Mammary epithelial cell (primary cell): ENCODE measurements at regions of chr15 and their contacts with region 1.

Region 1: GRCh38 chr15:56491110-56491722 is 26.3 kb upstream of the MNS1 start:
- DNase-seq: peak; percentile 48
- H3K4me3 ChIP-seq: no peak overlapping the region
- H3K27ac ChIP-seq: no peak overlapping the region
- H3K4me1 ChIP-seq: no peaks in the 10 kb centered on the region
- H3K27me3 ChIP-seq: no peaks in the 10 kb centered on the region
- CTCF ChIP-seq: peak; percentile 95 to 99

Region 2: DNA sequence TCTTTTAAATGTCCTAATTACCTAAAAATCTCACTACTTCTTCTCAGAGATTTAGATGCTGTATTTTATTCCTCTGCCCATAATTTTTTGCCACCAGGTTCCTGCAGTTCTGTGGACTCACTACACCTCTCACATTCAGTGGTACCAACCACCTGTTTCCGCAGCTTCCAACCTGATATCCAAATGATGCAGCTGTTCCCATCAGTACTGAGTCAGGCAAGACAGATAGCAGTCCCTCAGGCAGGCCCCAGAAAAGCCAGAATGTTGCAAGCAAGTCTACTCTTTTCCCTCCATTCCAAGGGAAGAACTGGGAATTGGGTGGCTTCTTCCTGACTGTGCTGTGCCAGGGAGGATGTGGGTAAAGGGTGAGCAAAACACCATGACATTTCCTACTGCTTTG is 65.2 kb before region 1 on chr15:
- CTCF ChIA-PET with region 1: no interaction called
- dilution Hi-C with region 1: no loop called
- in situ Hi-C with region 1: no loop called
- intact Hi-C with region 1: no loop called
- DNase-seq: no peak
- H3K4me3 ChIP-seq: no peak overlapping the region
- H3K27ac ChIP-seq: no peak overlapping the region
- H3K4me1 ChIP-seq: no peaks in the 10 kb centered on the region
- H3K27me3 ChIP-seq: no peaks in the 10 kb centered on the region
- CTCF ChIP-seq: no peak

Region 3: DNA sequence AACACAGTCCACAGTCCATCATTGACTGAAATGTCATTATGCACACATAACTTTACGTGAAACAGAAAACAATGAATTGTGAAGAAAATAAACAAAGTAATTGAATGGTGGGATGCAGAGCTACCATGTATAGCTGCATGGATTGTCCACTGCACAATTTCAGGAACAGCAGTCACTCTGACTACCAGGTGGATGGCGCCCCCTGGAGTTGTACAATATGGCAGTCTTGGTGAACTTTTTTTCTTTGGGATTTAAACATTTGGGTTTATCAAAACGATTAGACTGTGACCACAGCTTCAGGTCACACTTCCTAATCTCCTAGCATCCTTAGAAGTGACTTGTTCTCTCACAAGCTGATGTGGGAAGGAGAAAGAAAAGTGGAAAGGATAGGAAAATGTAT is 378.4 kb after region 1 on chr15:
- CTCF ChIA-PET with region 1: interaction called, 6 read pairs
- dilution Hi-C with region 1: no loop called
- in situ Hi-C with region 1: loop called in 1 of 2 experiments (anchors 10 kb)
- intact Hi-C with region 1: loop called (anchors 1 kb)
- DNase-seq: no peak
- H3K4me3 ChIP-seq: no peak overlapping the region
- H3K27ac ChIP-seq: no peak overlapping the region
- H3K4me1 ChIP-seq: peaks cover 9% of the 10 kb centered on the region
- H3K27me3 ChIP-seq: no peaks in the 10 kb centered on the region
- CTCF ChIP-seq: peak; percentile 41 to 48

Region 4: DNA sequence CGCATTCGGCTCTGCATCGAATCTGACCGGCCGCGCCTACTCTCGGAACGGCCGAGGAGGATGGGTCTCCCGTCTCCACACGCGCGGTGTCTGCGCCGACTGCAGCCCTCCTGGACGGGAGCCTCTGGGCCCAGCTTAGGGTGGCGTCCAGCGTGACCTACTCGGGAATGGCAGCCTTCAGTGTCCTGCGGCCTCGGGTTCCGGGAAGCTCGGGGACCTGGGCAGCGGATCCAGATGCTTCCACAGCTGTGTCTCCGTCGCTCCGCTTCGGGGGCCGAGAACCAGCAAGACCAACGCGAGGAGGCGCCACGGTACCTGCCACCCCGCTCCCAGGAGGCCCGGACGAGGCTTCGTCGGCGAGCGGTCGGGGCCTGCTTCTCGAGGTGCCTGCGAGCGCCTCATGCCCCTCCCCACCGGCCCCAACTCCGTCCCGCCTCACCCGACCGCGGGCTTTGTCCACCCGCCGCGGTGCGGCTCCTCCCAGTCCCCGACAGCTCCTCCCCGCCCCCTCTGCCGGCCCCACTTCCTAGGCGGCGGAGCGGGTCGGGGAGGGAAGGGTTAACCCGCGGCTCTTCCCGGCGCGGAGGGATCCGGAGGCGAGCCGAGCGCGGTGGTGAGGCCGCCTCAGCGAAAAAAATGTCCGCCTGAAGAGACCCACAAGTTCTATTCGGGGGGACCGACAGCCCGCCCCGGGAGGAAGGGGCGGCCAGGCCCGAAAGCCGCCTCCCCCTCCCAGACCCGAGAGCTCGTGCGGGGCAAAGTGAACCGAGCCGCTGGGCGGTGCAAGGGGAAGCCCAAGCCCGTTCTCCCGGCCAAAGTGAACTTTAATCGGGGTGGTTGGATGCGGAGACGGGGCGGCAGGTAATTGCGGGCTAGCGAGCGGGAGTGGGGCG is 427.1 kb after region 1 on chr15 and contains the start of gene TCF12:
- CTCF ChIA-PET with region 1: no interaction called
- dilution Hi-C with region 1: no loop called
- in situ Hi-C with region 1: no loop called
- intact Hi-C with region 1: no loop called
- DNase-seq: peak; percentile 95
- H3K4me3 ChIP-seq: peak within 1 kb of the TSS; percentile 90 to 98 (median 97)
- H3K27ac ChIP-seq: peak within 1 kb of the TSS; percentile 84
- H3K4me1 ChIP-seq: peaks cover 8% of the 10 kb centered on the region
- H3K27me3 ChIP-seq: no peaks in the 10 kb centered on the region
- CTCF ChIP-seq: peak in 1 of 2 donors; percentile 66
- total RNA-seq, gene TCF12: 91.7 to 110 TPM

Region 5: GRCh38 chr15:57138349-57138788 is 647.2 kb after region 1 on chr15:
- CTCF ChIA-PET with region 1: no interaction called
- dilution Hi-C with region 1: no loop called
- in situ Hi-C with region 1: loop called in 1 of 2 experiments (anchors 10 kb)
- intact Hi-C with region 1: loop called (anchors 5 kb)
- DNase-seq: peak; percentile 41
- H3K4me3 ChIP-seq: no peak overlapping the region
- H3K27ac ChIP-seq: no peak overlapping the region
- H3K4me1 ChIP-seq: no peaks in the 10 kb centered on the region
- H3K27me3 ChIP-seq: no peaks in the 10 kb centered on the region
- CTCF ChIP-seq: peak; percentile 90 to 93

Region 6: GRCh38 chr15:57259568-57260040 is 768.4 kb after region 1 on chr15:
- CTCF ChIA-PET with region 1: no interaction called
- dilution Hi-C with region 1: loop called (anchors 25 kb)
- in situ Hi-C with region 1: no loop called
- intact Hi-C with region 1: no loop called
- DNase-seq: no peak
- H3K4me3 ChIP-seq: no peak overlapping the region
- H3K27ac ChIP-seq: no peak overlapping the region
- H3K4me1 ChIP-seq: no peaks in the 10 kb centered on the region
- H3K27me3 ChIP-seq: no peaks in the 10 kb centered on the region
- CTCF ChIP-seq: no peak

Region 7: DNA sequence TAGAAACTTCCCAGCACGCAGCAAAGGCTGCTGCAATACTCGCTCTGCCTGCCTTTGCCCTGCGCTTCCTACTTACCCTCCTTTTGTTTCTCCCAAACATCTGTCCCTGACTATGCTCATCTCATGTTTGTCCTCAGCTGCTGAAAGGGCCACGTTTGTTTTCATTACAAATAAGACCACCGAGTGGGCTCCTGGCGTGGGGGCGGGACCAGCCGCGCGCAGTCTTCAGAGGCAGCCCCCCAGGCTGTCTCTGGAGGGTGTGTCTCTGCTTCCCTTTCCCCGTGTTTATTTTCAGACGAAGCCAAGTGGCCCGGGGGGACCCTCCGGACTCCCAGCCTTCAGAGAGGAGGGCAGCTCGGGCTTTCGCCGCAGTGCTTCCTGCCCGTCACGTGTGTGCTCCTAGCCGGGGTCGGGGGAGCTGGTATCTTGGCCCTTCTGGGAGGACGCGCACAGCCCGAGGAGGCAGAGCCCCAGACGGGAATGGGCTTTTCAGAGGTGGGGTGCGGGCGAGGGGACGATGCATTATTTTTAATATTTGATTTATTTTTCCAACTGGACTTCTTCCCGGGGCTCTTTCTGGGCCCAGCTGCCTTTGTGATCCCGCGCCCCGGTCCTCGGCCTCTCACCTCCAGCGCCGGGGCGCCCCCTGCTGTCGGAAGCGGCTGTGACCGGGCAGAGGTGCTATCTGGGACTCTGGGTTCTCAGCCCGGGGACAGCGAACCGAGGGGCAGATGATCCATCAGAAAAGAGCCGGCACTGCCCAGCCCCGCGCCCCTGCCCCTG is 815.1 kb after region 1 on chr15:
- CTCF ChIA-PET with region 1: no interaction called
- dilution Hi-C with region 1: no loop called
- in situ Hi-C with region 1: loop called (anchors 5 to 10 kb)
- intact Hi-C with region 1: loop called (anchors 1 kb)
- DNase-seq: peak; percentile 42
- H3K4me3 ChIP-seq: peak overlapping the region; percentile 39 to 53 (median 46)
- H3K27ac ChIP-seq: no peak overlapping the region
- H3K4me1 ChIP-seq: peaks cover 12% of the 10 kb centered on the region
- H3K27me3 ChIP-seq: no peaks in the 10 kb centered on the region
- CTCF ChIP-seq: peak; percentile 55 to 91

Region 8: GRCh38 chr15:57527382-57528091 is 1036.3 kb after region 1 on chr15:
- CTCF ChIA-PET with region 1: no interaction called
- dilution Hi-C with region 1: no loop called
- in situ Hi-C with region 1: loop called in 1 of 2 experiments (anchors 25 kb)
- intact Hi-C with region 1: loop called (anchors 5 kb)
- DNase-seq: peak; percentile 68
- H3K4me3 ChIP-seq: no peak overlapping the region
- H3K27ac ChIP-seq: no peak overlapping the region
- H3K4me1 ChIP-seq: no peaks in the 10 kb centered on the region
- H3K27me3 ChIP-seq: no peaks in the 10 kb centered on the region
- CTCF ChIP-seq: peak; percentile 46 to 63